ENCODE measurements at regions of chr13 and their contacts with region 1.

Region 1: DNA sequence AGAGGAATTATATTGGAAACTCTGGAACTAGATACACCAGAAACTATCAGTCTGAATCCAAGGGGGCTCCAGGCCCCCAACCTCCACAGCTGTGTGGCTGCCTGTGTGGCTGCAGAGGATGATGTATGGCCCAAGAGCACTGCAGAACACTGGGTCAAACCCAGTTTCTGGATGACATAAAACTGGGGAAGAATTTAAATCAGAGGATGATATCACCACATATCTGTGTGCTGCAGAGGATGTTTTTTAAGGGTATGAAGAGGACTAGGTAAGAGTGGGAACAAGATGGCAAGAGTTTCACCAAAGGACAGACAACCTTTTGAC is 226.4 kb downstream of the SUCLA2 start:
- DNase-seq: no peak
- H3K4me3 ChIP-seq: no peak overlapping the region
- CTCF ChIP-seq: no peak
- POLR2A ChIP-seq: no peak

Region 2: GRCh38 chr13:46831588-46832194 is 942.9 kb before region 1 on chr13:
- intact Hi-C with region 1: loop called (anchors 10 kb)
- DNase-seq: peak in 1 of 2 donors; percentile 47
- H3K4me3 ChIP-seq: no peak overlapping the region
- CTCF ChIP-seq: no peak
- POLR2A ChIP-seq: no peak

Region 3: GRCh38 chr13:47426126-47426849 is 348.3 kb before region 1 on chr13:
- intact Hi-C with region 1: no loop called
- DNase-seq: peak in 1 of 2 donors; percentile 58
- H3K4me3 ChIP-seq: no peak overlapping the region
- CTCF ChIP-seq: no peak
- POLR2A ChIP-seq: no peak

Region 4: DNA sequence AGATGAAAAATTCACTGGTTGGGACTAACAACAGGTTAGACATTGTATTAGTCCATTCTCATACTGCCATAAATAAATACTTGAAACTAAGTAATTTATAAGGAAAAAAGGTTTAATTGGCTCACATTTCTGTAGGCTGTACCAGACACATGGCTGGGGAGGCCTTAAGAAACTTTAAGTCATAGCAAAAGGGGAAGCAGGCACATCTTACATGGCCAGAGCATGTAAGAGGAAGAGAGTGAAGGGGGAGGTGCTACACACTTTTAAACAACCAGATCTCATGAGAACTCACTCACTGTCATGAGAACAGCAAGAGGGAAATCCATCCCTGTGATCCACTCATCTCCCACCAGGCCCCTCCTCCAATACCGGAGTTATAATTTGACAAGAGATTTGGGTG is 100.6 kb after region 1 on chr13:
- intact Hi-C with region 1: no loop called
- DNase-seq: no peak
- H3K4me3 ChIP-seq: no peak overlapping the region
- CTCF ChIP-seq: no peak
- POLR2A ChIP-seq: no peak